Activated B cell treated with CpG ODN at 0.5 μM for 24 hours (primary cell): ENCODE measurements at regions of chr17 and their contacts with region 1.

Region 1: DNA sequence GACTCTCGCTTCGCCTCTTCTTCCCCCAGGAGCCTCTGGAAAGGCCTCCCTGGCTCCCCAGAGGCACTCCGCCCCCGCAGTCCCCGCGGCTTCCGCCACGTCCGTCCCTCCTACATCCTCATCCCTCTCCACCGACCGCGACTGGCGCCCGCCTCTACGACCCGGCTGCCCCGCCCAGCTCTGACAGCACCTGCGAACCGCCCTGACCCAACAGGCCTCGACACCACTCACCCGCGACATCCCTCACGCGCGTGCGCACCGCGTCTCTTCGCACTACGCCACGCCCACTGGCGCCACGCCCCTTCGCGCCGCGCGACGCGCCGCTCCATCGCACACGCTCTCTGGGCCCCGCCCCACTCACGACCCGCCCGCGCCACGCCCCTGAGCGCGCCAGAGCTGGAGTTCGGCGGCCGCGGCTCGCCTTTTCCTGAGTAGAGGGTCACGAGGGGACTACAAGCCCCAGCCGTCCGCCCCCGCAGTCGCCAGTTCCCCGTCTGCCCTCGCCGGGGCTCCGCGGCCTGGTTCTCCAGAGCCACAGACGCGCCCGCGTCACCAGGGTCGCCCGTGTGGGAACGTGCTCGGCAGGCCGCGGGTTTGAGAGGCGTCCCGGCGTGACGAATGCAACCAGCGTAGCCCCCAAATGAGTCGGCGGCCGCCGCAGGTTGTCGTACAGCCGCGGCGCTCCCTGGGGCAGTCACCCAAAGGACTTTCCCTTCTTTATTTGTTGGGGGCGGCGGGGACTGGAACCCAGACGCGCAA is 56.2 kb upstream of the LRRC37A3 start:
- DNase-seq: peak; percentile 98
- ATAC-seq: peak; percentile 76
- H3K4me3 Mint-ChIP-seq: peak overlapping the region; percentile 92
- H3K27ac Mint-ChIP-seq: peak overlapping the region; percentile 99
- H3K4me1 Mint-ChIP-seq: peaks cover 57% of the 10 kb centered on the region
- H3K27me3 Mint-ChIP-seq: no peaks in the 10 kb centered on the region
- CTCF ChIP-seq: no peak

Region 2: GRCh38 chr17:64920026-64920418 is 55.5 kb before region 1 on chr17:
- CTCF ChIA-PET with region 1: no interaction called
- POLR2A ChIA-PET with region 1: interaction called, 10 read pairs
- intact Hi-C with region 1: loop called (anchors 2 kb)
- DNase-seq: no peak
- ATAC-seq: no peak
- H3K4me3 Mint-ChIP-seq: peak overlapping the region; percentile 87
- H3K27ac Mint-ChIP-seq: peak overlapping the region; percentile 92
- H3K4me1 Mint-ChIP-seq: peaks cover 47% of the 10 kb centered on the region
- H3K27me3 Mint-ChIP-seq: no peaks in the 10 kb centered on the region
- CTCF ChIP-seq: no peak

Region 3: DNA sequence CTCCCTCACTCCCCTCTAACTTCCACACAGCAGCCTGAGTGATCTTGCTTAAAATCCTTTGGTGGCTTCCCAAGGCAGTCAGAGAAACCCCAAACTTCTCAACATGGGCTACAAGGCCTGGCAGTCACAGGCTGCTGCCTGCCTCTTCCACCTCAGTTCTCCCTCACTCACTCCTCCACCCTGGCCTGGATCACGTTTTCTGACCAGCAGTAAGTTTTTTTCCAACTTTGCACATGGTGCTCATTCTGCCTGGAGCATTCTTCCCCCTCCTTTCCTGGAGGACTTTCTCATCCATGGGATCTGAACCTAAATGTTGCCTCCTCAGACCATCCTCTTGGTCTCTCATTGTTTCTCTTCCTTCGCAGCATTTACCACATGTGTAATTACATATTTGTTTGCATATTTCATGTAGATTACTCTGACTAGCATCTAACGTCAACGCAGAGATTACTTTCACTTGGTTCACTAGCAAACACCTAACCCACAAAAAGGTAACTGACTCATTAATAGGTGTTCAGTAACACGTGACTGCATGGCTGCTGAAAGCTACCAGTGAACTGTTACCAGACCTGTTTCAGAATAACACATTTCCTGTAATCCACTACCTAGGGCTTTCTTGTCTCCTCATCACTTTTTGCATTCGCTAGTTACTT is 64.0 kb after region 1 on chr17:
- CTCF ChIA-PET with region 1: no interaction called
- POLR2A ChIA-PET with region 1: interaction called, 21 read pairs
- intact Hi-C with region 1: no loop called
- DNase-seq: no peak
- ATAC-seq: peak; percentile 73
- H3K4me3 Mint-ChIP-seq: peak overlapping the region; percentile 53
- H3K27ac Mint-ChIP-seq: peak overlapping the region; percentile 85
- H3K4me1 Mint-ChIP-seq: peaks cover 92% of the 10 kb centered on the region
- H3K27me3 Mint-ChIP-seq: no peaks in the 10 kb centered on the region
- CTCF ChIP-seq: no peak

Region 4: DNA sequence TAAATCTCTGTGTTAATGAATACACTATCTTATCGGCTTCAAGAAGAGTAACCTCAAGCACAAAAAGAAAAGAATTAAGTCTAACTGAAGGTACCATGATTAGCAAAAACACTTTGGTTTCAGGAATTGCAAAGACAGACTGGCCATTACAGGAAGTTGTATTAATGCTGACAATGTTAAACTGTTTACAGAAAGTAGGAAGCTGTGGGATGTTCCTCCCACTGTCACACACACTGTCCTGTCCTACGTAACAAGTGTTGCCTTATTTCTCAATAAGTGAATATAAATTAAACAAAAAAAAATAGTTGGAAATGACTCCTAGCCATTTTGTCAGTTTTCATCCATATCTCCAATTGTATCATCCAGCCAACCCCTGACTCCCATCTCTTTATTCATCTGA is 72.4 kb after region 1 on chr17:
- CTCF ChIA-PET with region 1: no interaction called
- POLR2A ChIA-PET with region 1: interaction called, 11 read pairs
- intact Hi-C with region 1: no loop called
- DNase-seq: no peak
- ATAC-seq: peak; percentile 34
- H3K4me3 Mint-ChIP-seq: no peak overlapping the region
- H3K27ac Mint-ChIP-seq: peak overlapping the region; percentile 60
- H3K4me1 Mint-ChIP-seq: peaks cover 86% of the 10 kb centered on the region
- H3K27me3 Mint-ChIP-seq: no peaks in the 10 kb centered on the region
- CTCF ChIP-seq: no peak

Region 5: DNA sequence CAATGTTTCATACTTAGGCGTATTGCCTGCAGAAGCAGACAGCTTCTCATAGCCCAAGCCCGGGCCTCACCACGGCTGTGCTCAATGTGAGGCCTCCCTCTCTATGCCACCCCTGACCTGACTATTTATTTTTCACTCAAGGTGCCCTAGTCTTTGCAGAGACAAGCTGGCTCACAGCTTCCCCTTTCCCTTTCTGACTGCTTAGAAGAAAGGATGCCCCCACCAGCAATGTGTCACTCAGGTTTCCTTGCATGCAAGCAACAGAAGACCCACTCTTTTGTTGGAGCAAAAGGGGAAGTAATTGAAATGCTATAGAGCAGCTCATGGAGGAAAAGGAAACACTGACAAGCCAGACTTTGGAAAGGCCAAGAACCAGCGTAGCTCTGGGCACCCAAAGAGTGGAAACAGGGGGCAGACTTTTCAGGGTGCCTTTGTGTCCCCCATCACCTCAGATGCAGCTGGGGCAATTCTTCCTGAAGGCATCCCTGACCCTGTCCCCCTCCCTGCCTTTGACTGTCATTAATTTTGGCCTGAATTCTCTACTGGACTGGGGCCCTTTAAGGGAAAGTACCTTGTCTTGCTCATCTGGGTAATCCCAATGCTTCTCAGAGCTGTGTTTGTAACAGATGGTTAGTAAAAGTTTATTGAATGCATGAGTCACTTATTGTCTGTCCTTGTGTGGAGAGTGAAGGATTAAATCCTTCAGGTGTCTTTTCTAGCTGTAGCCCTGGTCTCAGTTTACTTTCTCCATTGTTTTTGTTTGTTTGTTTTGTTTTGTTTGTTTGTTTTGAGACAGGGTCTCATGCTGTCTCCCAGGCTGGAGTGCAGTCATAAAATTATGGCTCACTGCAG is 179.5 kb after region 1 on chr17:
- CTCF ChIA-PET with region 1: no interaction called
- POLR2A ChIA-PET with region 1: interaction called, 10 read pairs
- intact Hi-C with region 1: no loop called
- DNase-seq: peak; percentile 30
- ATAC-seq: peak; percentile 85
- H3K4me3 Mint-ChIP-seq: peak overlapping the region; percentile 64
- H3K27ac Mint-ChIP-seq: peak overlapping the region; percentile 82
- H3K4me1 Mint-ChIP-seq: peaks cover 23% of the 10 kb centered on the region
- H3K27me3 Mint-ChIP-seq: no peaks in the 10 kb centered on the region
- CTCF ChIP-seq: no peak

Region 6: DNA sequence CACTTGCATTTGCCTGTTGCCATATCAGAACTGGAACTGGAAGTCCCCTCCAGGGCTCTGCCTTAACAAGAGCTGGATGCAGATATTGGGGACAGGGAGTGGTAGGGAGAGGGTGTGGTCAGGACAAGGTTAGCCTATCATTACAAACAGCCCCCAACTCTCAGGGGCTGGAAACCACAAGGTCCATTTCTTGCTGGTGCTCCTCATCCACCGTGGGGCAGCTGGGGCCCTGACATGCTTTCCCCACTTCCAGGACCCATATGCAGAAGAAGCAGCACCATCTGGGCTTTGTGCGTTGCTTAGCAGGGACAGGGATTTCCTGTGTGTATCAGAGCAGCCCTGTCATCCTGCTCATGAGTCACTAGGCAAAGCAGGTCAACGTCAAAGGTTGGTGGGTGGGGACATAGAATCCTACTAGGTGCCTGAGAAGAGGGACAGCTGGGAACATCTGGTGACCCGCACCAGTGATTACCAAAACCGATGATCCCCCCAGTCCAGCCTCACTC is 188.5 kb after region 1 on chr17:
- CTCF ChIA-PET with region 1: no interaction called
- POLR2A ChIA-PET with region 1: no interaction called
- intact Hi-C with region 1: loop called (anchors 1 kb)
- DNase-seq: peak; percentile 27
- ATAC-seq: peak; percentile 94
- H3K4me3 Mint-ChIP-seq: peak overlapping the region; percentile 11
- H3K27ac Mint-ChIP-seq: peak overlapping the region; percentile 55
- H3K4me1 Mint-ChIP-seq: peaks cover 17% of the 10 kb centered on the region
- H3K27me3 Mint-ChIP-seq: no peaks in the 10 kb centered on the region
- CTCF ChIP-seq: no peak

Region 7: DNA sequence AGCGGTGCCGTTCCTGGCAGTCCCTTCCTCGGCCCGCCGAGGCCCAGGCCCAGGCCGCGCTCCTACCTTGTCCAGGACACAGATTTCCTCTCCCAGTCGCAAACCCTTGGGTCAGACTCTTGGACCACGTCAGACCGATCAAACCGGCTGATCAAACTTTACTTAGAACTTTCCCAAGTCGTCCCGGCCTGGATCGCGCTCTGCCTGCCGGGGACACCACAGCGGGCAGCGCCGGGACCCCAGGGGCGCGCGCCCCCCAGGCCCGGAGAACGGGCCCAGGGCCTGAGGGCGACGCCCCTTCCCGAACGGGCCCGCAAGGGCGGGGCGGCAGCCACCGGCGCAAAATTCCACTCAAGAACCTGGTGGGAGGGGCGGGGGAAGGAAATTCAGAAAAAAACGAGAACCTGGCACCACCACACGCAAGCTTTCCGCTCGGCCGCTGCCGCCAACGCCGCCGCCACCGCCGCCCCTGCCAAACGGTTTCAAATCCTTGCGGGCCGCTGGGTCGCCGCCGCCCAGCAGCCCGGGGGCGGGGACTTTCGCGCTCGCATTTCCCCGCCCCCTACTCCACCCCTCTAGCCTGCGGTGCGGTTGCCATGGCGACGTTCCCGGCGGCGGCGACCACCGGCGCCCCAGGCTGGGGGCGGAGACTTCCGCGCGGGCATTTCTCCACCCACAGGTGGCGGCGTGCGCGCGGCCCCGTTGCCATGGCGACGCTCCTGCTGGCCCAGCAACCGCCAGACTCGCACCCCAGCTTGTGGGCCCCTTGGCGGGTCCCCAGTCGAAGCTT is 1216.3 kb after region 1 on chr17 and contains the start of gene CEP112:
- CTCF ChIA-PET with region 1: no interaction called
- POLR2A ChIA-PET with region 1: no interaction called
- intact Hi-C with region 1: loop called (anchors 2 kb)
- DNase-seq: peak; percentile 82
- ATAC-seq: peak; percentile 76
- H3K4me3 Mint-ChIP-seq: peak within 1 kb of the TSS; percentile 85
- H3K27ac Mint-ChIP-seq: peak within 1 kb of the TSS; percentile 80
- H3K4me1 Mint-ChIP-seq: peaks cover 34% of the 10 kb centered on the region
- H3K27me3 Mint-ChIP-seq: peaks cover 4% of the 10 kb centered on the region
- CTCF ChIP-seq: no peak
- total RNA-seq, gene CEP112: 3.8 and 3.9 TPM in 2 replicates